ENCODE measurements at regions of chr1 and their contacts with region 1.

Region 1: GRCh38 chr1:156060937-156061636 is at the start of gene RAB25:
- DNase-seq: no peak
- ATAC-seq: no peak
- H3K4me3 ChIP-seq: no peak within 1 kb of the TSS
- H3K27ac ChIP-seq: no peak within 1 kb of the TSS
- H3K4me1 ChIP-seq: peaks cover 39% of the 10 kb centered on the region
- H3K27me3 ChIP-seq: no peaks in the 10 kb centered on the region
- CTCF ChIP-seq: no peak
- EP300 ChIP-seq: no peak
- POLR2A ChIP-seq: no peak
- RAD21 ChIP-seq: no peak
- total RNA-seq, gene RAB25: 0.20 TPM in 1 of 2 replicates, not detected in the other

Region 2: DNA sequence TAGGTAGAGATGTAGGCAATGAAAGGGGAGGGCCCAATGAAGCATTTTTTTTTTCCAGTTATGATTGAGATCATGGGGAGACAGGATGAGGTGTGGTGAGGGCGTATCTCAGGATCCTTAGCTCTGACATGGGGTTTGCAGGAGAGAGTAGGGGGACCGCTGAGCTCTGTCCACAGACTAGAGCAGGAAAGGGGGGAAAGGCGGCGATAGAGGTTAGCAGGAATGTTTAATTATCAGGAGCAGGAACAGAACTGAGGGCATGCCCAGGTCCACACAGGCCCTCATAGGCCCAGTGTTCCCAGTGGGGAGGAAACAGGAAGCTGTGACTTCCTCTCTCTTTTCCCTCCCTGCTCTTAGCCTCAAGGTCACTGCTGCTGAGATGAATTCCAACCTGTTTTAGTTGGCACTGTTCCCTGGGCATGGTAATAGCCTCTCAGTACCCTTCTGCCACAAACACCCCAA is 120.5 kb before region 1 on chr1:
- CTCF ChIA-PET with region 1: interaction called, 8 read pairs
- POLR2A ChIA-PET with region 1: interaction called, 9 read pairs
- in situ Hi-C with region 1: loop called (anchors 10 kb)
- intact Hi-C with region 1: loop called (anchors 1 kb)
- DNase-seq: peak; percentile 86
- ATAC-seq: peak; percentile 65
- H3K4me3 ChIP-seq: peak overlapping the region; percentile 50 to 65 (median 54); a peak in 5 of 6 replicates
- H3K27ac ChIP-seq: peak overlapping the region; percentile 84
- H3K4me1 ChIP-seq: peaks cover 71% of the 10 kb centered on the region
- H3K27me3 ChIP-seq: no peaks in the 10 kb centered on the region
- CTCF ChIP-seq: peak; percentile 4; the same call in 1 of the 2 replicates
- EP300 ChIP-seq: 0 out of 4 replicates have a peak, but pooled peaks of 1 of the 2 experiments have one; percentile 29
- POLR2A ChIP-seq: peak; percentile 45 to 64
- RAD21 ChIP-seq: no peak

Region 3: DNA sequence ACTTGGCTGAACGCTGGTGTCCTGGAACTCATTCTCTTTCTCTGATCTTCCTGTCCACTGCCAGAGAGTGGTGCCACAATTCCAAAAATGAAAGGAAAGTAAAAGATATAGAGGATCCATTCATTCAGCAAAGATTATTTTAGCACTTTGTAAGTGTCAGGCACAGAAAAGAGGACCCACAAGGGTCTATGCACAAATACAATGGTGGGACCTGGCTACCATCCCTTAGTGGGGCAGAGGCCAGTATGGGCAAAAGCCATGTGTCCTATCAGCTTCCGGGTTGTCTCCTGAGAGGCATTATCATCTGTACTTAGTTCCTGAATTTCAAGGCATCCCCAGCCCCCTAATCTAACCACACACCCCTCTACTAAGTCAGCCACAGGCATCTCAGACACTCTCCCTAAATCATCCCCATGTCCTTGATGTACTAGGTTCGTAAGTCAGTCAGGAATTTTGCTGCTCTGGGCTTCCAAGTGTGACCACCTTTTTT is 59.4 kb before region 1 on chr1:
- CTCF ChIA-PET with region 1: no interaction called
- POLR2A ChIA-PET with region 1: no interaction called
- in situ Hi-C with region 1: no loop called
- intact Hi-C with region 1: loop called (anchors 10 kb)
- DNase-seq: no peak
- ATAC-seq: peak; percentile 46
- H3K4me3 ChIP-seq: peak overlapping the region; percentile 40 to 55 (median 45)
- H3K27ac ChIP-seq: peak overlapping the region; percentile 48
- H3K4me1 ChIP-seq: peaks cover 55% of the 10 kb centered on the region
- H3K27me3 ChIP-seq: no peaks in the 10 kb centered on the region
- CTCF ChIP-seq: peak; percentile 45
- EP300 ChIP-seq: no peak
- POLR2A ChIP-seq: no peak
- RAD21 ChIP-seq: no peak

Region 4: DNA sequence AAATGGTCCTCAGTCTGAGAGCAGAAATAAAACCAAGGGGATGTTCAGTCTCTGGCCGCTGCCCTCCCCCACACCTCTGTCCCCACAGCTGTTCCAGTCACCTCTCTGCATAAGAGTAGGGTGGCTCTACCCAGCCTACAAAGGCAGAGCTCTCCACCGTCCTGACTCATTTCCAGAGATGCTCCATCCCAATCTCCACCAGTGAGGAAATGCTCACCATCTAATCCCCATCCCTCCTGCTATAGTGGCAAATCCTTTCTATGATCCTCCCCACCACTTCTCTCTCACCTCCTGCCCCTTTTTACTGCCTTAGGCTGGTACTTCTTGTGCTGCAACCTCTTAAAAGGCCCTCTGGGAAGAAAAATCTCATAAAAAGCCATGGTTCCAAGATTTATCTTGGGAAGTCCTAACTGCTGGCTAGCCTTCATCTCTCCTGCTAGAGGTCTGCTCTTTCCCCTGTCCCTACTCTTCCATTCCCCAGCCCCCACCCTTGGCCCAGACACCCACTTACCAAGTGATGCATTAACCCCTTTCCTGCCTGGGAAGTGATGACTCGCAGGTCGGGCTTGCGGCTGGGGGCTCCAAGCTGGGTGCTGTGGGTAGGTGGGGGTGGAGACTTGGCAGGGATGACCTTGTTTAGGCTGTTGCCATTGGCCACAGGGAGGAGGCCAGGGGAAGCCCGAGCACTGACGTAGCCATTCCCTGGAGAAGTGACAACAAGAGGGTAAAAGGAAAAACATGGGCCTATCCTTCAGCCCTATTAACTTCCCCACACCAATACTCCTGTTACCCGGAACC is 415.6 kb after region 1 on chr1:
- CTCF ChIA-PET with region 1: no interaction called
- POLR2A ChIA-PET with region 1: no interaction called
- in situ Hi-C with region 1: no loop called
- intact Hi-C with region 1: no loop called
- DNase-seq: peak; percentile 45
- ATAC-seq: no peak
- H3K4me3 ChIP-seq: no peak overlapping the region
- H3K27ac ChIP-seq: peak overlapping the region; percentile 25
- H3K4me1 ChIP-seq: peaks cover 57% of the 10 kb centered on the region
- H3K27me3 ChIP-seq: no peaks in the 10 kb centered on the region
- CTCF ChIP-seq: no peak
- EP300 ChIP-seq: no peak
- POLR2A ChIP-seq: no peak
- RAD21 ChIP-seq: no peak

Measured in HepG2 (cell line).